Panc1 (cell line): ENCODE measurements at regions of chr7 and their contacts with region 1.

Region 1: DNA sequence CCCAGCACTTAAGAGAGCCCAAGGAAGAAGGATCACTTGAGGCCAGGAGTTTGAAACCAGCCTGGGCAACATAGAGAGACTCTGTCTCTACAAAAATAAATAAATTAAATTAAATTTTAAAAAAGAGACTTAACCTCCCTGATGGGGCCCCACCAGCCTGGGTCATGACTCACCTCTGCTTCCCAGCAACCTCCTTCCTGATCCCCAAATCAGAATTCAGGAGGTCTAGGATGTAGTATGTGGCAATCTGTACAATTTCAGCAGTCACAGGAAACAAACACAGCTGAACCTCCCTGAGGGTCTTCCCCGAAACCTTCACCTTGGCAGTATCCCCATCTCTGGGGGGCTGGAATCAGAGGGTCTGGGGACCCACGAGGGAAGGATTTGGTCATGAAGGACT is 9.7 kb upstream of the PPP1R35 start:
- DNase-seq: no peak
- ATAC-seq: no peak
- H3K4me3 ChIP-seq: no peak overlapping the region
- H3K27ac ChIP-seq: no peak overlapping the region
- H3K4me1 ChIP-seq: no peaks in the 10 kb centered on the region
- H3K27me3 ChIP-seq: no peaks in the 10 kb centered on the region
- CTCF ChIP-seq: no peak

Region 2: GRCh38 chr7:100692578-100692961 is 246.5 kb after region 1 on chr7:
- CTCF ChIA-PET with region 1: interaction called, 14 read pairs
- POLR2A ChIA-PET with region 1: no interaction called
- in situ Hi-C with region 1: no loop called
- intact Hi-C with region 1: no loop called
- DNase-seq: no peak
- ATAC-seq: no peak
- H3K4me3 ChIP-seq: peak overlapping the region; percentile 84 to 91
- H3K27ac ChIP-seq: peak overlapping the region; percentile 94
- H3K4me1 ChIP-seq: peaks cover 24% of the 10 kb centered on the region
- H3K27me3 ChIP-seq: no peaks in the 10 kb centered on the region
- CTCF ChIP-seq: no peak